Caco-2 (cell line): ENCODE measurements at regions of chr7 and their contacts with region 1.

Region 1: GRCh38 chr7:74417419-74417971 is 36.2 kb upstream of the GTF2IRD1 start:
- DNase-seq: peak; percentile 73 to 84
- H3K4me3 ChIP-seq: no peak overlapping the region
- H3K4me3 Mint-ChIP-seq: no peak overlapping the region
- H3K27ac Mint-ChIP-seq: no peak overlapping the region
- H3K4me1 ChIP-seq: no peaks in the 10 kb centered on the region
- H3K4me1 Mint-ChIP-seq: peaks cover 9% of the 10 kb centered on the region
- H3K27me3 ChIP-seq: no peaks in the 10 kb centered on the region
- H3K27me3 Mint-ChIP-seq: no peaks in the 10 kb centered on the region
- CTCF ChIP-seq: peak; percentile 93 to 95

Region 2: DNA sequence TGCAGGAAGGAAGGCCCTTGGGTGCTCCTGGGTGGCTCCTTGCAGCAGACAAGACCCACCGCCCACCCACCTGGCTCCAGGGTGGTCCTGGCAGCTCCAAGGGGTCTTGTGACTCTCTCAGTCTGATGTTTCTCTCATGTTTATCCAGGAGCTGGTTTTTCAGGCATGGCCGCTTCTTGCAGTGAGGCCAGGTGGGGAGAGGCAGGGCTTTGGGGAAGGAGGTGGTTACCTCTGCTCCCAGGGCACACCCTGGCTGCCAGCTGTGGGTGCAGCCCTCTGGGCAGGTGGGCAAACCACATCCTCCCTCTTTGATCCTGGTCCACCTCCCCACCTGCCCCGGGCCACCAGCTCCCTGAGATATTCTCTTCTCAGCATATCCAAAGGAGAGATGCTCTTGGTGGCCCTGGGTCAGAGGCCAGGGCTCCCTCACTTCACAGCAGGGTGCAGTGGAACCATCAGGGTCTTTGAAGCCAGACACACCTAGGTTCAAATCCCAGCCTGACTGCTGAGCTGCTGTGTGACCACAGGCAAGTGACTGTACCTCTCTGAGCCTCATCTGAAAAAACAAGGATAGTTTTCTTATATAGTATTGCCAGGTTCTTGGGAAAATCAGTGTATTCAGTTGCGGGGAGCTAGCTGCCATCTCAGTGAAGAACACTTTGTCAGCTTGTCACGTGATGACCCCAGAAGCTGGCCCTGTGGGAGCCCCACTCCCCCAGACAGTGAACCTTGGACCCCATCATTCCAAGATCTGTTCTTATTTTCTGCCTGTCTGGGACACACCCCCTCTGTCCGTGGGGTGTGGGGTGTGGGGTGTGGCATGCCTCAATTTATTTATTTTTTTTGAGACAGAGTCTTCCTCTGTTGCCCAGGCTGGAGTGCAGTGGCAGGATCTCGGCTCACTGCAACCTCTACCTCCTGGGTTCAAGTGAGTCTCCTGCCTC is 47.7 kb after region 1 on chr7:
- CTCF ChIA-PET with region 1: no interaction called
- POLR2A ChIA-PET with region 1: no interaction called
- intact Hi-C with region 1: loop called (anchors 1 kb)
- DNase-seq: peak in 1 of 2 experiments; percentile 49
- H3K4me3 ChIP-seq: no peak overlapping the region
- H3K4me3 Mint-ChIP-seq: no peak overlapping the region
- H3K27ac Mint-ChIP-seq: no peak overlapping the region
- H3K4me1 ChIP-seq: peaks cover 16% of the 10 kb centered on the region
- H3K4me1 Mint-ChIP-seq: peaks cover 16% of the 10 kb centered on the region
- H3K27me3 ChIP-seq: no peaks in the 10 kb centered on the region
- H3K27me3 Mint-ChIP-seq: no peaks in the 10 kb centered on the region
- CTCF ChIP-seq: no peak

Region 3: DNA sequence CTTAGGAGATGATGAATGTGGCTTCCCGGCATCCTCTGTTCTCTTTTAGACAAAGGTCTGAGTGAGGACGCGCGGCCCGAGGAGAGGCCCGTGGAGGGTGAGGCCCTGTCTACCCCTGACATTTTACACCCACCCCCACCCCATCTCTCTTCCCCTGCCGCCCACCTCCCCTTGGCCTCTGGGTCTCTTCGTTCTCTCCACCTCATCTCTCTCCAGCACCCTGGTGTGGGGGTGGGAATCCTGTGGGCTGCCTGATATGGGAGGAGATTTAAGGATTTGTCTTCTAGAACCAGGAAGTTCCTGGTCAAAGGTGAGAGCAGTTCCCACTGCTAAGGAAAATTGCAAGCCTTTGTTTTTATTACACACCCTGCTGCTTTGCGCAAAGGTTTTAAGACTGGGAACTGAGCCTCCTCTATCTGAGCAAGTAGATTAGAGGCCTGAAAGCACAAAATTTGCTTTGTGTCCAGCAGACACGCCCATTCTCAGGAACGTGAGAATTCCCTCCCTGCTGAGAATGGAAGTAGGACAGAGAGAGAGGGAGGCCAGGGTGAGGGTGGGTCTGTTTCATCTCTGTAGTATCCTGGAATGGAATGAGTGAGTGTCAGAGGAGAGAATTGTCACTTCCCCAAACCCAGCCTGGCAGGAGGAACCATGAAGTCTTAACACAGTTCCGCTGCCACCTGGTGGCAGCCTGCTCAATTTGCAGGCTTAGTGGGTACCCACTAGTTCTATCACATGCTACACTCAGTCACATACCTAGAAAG is 127.4 kb after region 1 on chr7:
- CTCF ChIA-PET with region 1: no interaction called
- POLR2A ChIA-PET with region 1: no interaction called
- intact Hi-C with region 1: loop called (anchors 1 kb)
- DNase-seq: peak; percentile 61 to 67
- H3K4me3 ChIP-seq: no peak overlapping the region
- H3K4me3 Mint-ChIP-seq: no peak overlapping the region
- H3K27ac Mint-ChIP-seq: peak overlapping the region; percentile 69
- H3K4me1 ChIP-seq: 0 out of 2 replicates have a peak, but pooled peaks cover 6% of the 10 kb centered on the region
- H3K4me1 Mint-ChIP-seq: peaks cover 7% of the 10 kb centered on the region
- H3K27me3 ChIP-seq: no peaks in the 10 kb centered on the region
- H3K27me3 Mint-ChIP-seq: no peaks in the 10 kb centered on the region
- CTCF ChIP-seq: peak; percentile 69 to 74

Region 4: DNA sequence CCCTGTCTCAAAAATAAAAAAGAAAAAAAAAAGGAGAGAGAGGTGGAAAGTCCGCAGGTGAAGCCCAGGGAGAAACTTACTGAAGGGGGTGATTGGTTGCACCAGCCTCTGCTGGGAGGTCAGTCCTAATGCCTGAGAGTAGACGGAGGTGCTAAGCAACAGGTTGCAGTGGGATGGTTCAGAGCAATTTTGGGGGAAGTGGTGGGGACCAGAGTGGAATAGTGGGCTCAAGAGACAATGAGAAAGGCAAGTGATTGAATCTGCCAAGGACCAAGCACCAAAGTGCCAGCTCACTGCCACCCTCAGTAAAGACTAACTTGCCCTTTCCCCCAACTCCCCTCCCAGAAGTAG is 149.8 kb after region 1 on chr7:
- CTCF ChIA-PET with region 1: interaction called, 3 read pairs
- POLR2A ChIA-PET with region 1: no interaction called
- intact Hi-C with region 1: loop called (anchors 1 kb)
- DNase-seq: no peak
- H3K4me3 ChIP-seq: no peak overlapping the region
- H3K4me3 Mint-ChIP-seq: no peak overlapping the region
- H3K27ac Mint-ChIP-seq: peak overlapping the region; percentile 67
- H3K4me1 ChIP-seq: peaks cover 16% of the 10 kb centered on the region
- H3K4me1 Mint-ChIP-seq: peaks cover 22% of the 10 kb centered on the region
- H3K27me3 ChIP-seq: no peaks in the 10 kb centered on the region
- H3K27me3 Mint-ChIP-seq: no peaks in the 10 kb centered on the region
- CTCF ChIP-seq: no peak